ENCODE measurements at regions of chr9 and their contacts with region 1.

Region 1: DNA sequence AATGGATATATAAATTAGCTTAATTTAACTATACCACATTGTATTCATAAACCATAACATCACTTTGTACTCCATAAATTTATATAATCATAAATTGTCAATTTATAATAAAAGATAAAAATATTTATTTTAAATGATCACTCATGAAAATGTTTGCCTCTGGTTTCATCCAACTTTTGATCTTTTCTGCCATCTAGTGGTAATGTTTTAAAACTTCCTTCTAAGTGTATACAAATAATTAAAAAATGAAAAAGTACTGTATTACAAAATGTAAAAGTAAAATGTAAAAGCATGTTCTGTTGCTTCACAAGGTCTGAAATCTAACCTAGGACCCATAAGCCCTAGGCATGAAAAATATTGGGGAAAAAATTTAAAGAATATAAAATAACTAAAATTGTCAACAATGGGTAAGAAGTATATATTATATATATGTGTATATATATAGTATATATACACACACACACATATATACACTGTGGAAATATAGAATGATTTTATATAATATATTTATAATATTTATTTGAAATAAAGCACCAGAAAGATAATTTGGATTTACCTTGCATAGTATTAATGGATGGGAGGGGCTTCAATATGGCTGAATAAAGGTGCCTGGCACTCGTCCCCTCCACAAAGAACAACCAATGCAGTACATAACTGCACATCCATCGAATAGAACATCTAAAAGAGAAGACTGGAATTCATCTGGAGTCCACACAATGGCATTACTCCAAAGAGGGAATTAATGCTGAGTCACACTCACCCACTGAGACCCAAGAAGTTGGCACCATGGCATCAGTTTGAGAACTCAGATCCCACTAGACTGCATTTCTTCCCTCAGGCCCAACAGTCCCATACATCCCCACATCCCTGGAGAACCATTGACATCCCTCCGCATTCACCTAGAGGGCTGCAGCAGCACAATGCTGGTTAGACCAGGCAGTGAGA is 32.5 kb downstream of the ANXA1 start:
- DNase-seq: no peak
- H3K4me3 ChIP-seq: no peak overlapping the region
- H3K27ac ChIP-seq: no peak overlapping the region
- H3K4me1 ChIP-seq: peaks cover 0 to 17% (median 10%) of the 10 kb centered on the region in 4 donors
- H3K27me3 ChIP-seq: no peaks in the 10 kb centered on the region
- CTCF ChIP-seq: peak; percentile 52 to 67 (median 56)
- EP300 ChIP-seq: no peak
- POLR2A ChIP-seq: no peak

Region 2: GRCh38 chr9:72894342-72894741 is 289.8 kb before region 1 on chr9:
- intact Hi-C with region 1: no loop called
- DNase-seq: no peak
- H3K4me3 ChIP-seq: no peak overlapping the region
- H3K27ac ChIP-seq: no peak overlapping the region
- H3K4me1 ChIP-seq: peaks cover 0 to 51% (median 32%) of the 10 kb centered on the region in 4 donors
- H3K27me3 ChIP-seq: no peaks in the 10 kb centered on the region
- CTCF ChIP-seq: no peak
- EP300 ChIP-seq: no peak
- POLR2A ChIP-seq: no peak

Region 3: GRCh38 chr9:73104342-73104741 is 79.8 kb before region 1 on chr9:
- intact Hi-C with region 1: loop called (anchors 2 kb)
- DNase-seq: no peak
- H3K4me3 ChIP-seq: no peak overlapping the region
- H3K27ac ChIP-seq: no peak overlapping the region
- H3K4me1 ChIP-seq: no peaks in the 10 kb centered on the region
- H3K27me3 ChIP-seq: no peaks in the 10 kb centered on the region
- CTCF ChIP-seq: no peak
- EP300 ChIP-seq: no peak
- POLR2A ChIP-seq: no peak

Measured in esophagus muscularis mucosa (tissue), 4 donors.